Posterior vena cava (tissue), 2 donors: ENCODE measurements at regions of chr2 and their contacts with region 1.

Region 1: DNA sequence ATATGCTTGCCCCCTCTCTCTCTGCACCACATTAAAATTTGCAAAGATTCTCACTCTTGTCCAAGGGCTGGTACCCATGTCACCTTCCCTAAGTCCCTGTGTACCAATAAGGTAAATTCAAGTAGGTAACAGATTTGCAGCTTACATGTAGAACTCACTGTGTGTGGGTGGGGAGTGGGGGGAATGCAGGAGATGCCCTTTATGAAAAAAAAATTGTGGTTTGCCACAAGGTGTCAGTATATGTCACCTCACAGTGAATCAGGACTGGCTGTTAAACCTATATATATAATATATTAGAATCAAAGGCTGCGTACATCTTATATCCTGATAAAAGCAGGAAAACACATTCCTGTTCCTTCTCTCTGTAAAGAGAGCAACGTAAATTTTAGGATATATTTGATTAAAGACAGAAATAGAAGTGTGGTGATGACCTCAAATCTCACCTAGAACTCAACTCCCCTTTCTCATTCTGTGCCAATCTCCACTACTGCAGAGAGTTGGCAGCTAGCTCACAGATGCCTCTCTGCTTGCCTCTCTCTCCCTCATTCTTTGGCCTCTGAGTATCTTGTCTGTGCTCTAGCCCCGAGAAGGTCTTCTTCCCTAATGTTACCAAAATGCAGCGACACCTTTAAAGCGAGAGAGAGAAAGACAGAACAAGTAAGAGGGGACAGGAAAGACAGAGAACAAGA is 536 bp downstream of the XDH start:
- DNase-seq: no peak

Region 2: GRCh38 chr2:31457651-31458050 is 43.6 kb after region 1 on chr2:
- intact Hi-C with region 1: loop called in 1 of 2 experiments (anchors 1 kb)
- DNase-seq: no peak